ENCODE measurements at regions of chr6 and their contacts with region 1.

Region 1: DNA sequence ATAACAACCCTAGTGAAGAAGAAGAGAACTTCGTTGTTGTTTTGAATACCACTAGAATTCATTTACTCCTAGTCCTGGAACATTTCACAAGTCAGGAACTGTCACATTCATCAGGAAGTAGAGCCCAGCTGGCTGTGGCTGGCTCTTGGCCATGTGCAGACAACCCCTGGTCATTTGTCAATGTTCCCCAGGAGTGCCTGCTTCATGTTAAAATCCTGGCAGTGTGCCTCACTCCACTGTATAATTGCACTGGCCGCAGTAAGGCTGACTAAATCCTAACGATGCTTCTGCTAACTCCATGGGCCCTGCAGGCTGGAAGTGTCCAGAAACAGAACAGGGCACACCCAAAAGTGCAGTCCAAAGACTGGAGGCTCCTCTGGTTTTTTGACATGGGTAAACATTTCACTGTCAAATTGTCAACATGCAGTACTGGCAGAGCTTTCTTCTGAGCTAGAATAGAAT is 41.5 kb upstream of the ADGRF1 start:
- DNase-seq: peak; percentile 91
- H3K4me3 Mint-ChIP-seq: peak overlapping the region; percentile 20
- H3K27ac Mint-ChIP-seq: peak overlapping the region; percentile 40
- H3K4me1 Mint-ChIP-seq: peaks cover 19% of the 10 kb centered on the region
- H3K27me3 Mint-ChIP-seq: no peaks in the 10 kb centered on the region
- CTCF ChIP-seq: no peak

Region 2: GRCh38 chr6:47061309-47062300 is 22.0 kb before region 1 on chr6:
- CTCF ChIA-PET with region 1: interaction called, 3 read pairs
- POLR2A ChIA-PET with region 1: interaction called, 16 read pairs
- intact Hi-C with region 1: no loop called
- DNase-seq: peak; percentile 81
- H3K4me3 Mint-ChIP-seq: no peak overlapping the region
- H3K27ac Mint-ChIP-seq: peak overlapping the region; percentile 92
- H3K4me1 Mint-ChIP-seq: peaks cover 28% of the 10 kb centered on the region
- H3K27me3 Mint-ChIP-seq: no peaks in the 10 kb centered on the region
- CTCF ChIP-seq: no peak

Measured in MCF 10A (cell line).